HEK293T (cell line): ENCODE measurements at regions of chr15 and their contacts with region 1.

Region 1: GRCh38 chr15:42495361-42496212 is at the start of gene SNAP23:
- DNase-seq: peak; percentile 80

Region 2: GRCh38 chr15:42548253-42549031 is 52.9 kb after region 1 on chr15 and contains the starts of genes HAUS2 and LRRC57:
- CTCF ChIA-PET with region 1: no interaction called
- POLR2A ChIA-PET with region 1: interaction called, 11 read pairs
- DNase-seq: peak; percentile 84

Region 3: GRCh38 chr15:42695527-42696071 is 200.0 kb after region 1 on chr15:
- CTCF ChIA-PET with region 1: no interaction called
- POLR2A ChIA-PET with region 1: no interaction called
- DNase-seq: no peak